Prostate gland (tissue), 2 donors: ENCODE measurements at regions of chr18 and their contacts with region 1.

Region 1: DNA sequence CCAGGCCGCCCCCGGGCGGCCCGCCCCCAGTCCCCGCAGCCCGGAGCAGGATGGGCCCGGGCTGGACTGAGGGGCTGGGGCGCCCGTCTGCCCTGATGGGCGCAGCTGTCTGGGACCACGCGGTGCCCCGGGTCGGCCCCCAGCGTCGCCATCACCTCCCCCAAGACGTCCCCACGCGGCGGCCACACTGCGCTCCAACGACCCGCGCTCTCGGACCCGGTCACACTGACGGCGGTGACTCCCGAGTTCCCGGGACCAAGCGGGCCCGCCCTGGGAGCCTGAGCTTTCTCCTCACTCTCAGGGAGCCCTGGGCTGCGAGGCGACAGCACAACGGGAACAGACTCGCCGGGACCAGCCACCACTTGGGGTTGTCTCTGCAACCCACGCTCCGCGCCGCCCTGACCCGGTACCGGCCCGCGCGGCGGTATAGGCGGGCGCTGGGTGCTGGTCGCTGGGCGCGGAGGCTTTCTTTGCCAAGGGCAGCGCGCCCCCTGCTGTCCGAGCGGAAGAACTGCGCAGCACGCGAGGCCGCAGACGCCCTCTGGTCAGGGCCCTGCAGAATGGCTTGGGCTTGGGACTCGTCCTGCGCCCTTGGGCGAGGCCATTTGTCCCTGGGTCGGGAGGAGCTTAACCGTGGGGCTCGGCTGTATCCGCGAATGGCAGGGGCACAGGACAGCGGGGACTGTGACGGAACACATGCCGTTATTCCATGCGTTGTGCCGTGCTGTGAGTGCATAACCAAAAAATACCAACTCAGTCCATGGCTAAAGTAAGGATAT is 54.8 kb upstream of the ANKRD62 start:
- DNase-seq: peak; percentile 68
- H3K4me3 ChIP-seq: peak overlapping the region; percentile 32 to 44
- H3K27ac ChIP-seq: peak overlapping the region in 1 of 2 donors; percentile 4
- H3K4me1 ChIP-seq: no peaks in the 10 kb centered on the region
- H3K27me3 ChIP-seq: no peaks in the 10 kb centered on the region
- CTCF ChIP-seq: peak; percentile 95 to 99 (median 96)
- POLR2A ChIP-seq: no peak

Region 2: GRCh38 chr18:11654736-11655605 is 383.9 kb before region 1 on chr18:
- intact Hi-C with region 1: loop called (anchors 10 kb)
- DNase-seq: peak; percentile 58
- H3K4me3 ChIP-seq: no peak overlapping the region
- H3K27ac ChIP-seq: no peak overlapping the region
- H3K4me1 ChIP-seq: no peaks in the 10 kb centered on the region
- H3K27me3 ChIP-seq: peaks cover 6% of the 10 kb centered on the region
- CTCF ChIP-seq: peak; percentile 63 to 86 (median 76)
- POLR2A ChIP-seq: no peak

Region 3: DNA sequence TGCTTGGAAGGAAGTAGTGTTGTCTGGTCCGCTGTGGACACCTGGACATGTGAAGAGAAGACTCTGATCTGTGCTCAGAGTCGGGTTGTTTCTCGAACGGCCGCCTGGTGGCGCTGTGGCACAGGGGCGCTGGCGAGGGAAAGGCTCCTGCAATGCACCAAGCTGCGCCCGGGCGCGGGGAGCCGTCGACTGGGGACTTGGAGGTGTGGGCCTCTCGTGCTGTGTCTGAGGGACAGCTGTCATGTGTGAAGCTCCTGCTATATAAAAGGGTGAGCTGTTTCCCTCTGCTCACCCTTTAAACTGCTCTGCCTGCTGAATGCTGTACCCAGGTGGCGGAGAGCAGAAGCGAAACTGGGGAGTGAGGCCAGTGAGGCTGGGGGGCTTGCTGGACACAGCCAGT is 305.8 kb before region 1 on chr18:
- intact Hi-C with region 1: loop called (anchors 5 kb)
- DNase-seq: peak; percentile 46
- H3K4me3 ChIP-seq: no peak overlapping the region
- H3K27ac ChIP-seq: no peak overlapping the region
- H3K4me1 ChIP-seq: no peaks in the 10 kb centered on the region
- H3K27me3 ChIP-seq: no peaks in the 10 kb centered on the region
- CTCF ChIP-seq: peak; percentile 67 to 85 (median 72)
- POLR2A ChIP-seq: no peak

Region 4: GRCh38 chr18:11851146-11851805 is 187.6 kb before region 1 on chr18 and contains the start of gene CHMP1B:
- intact Hi-C with region 1: loop called (anchors 10 kb)
- DNase-seq: peak; percentile 98
- H3K4me3 ChIP-seq: peak within 1 kb of the TSS; percentile 77 to 94
- H3K27ac ChIP-seq: peak within 1 kb of the TSS; percentile 87 to 91
- H3K4me1 ChIP-seq: no peaks in the 10 kb centered on the region
- H3K27me3 ChIP-seq: no peaks in the 10 kb centered on the region
- CTCF ChIP-seq: peak in 2 of 4 experiments; percentile 28 to 36
- POLR2A ChIP-seq: peak; percentile 98
- total RNA-seq, gene CHMP1B: 42.8 to 50.0 TPM

Region 5: DNA sequence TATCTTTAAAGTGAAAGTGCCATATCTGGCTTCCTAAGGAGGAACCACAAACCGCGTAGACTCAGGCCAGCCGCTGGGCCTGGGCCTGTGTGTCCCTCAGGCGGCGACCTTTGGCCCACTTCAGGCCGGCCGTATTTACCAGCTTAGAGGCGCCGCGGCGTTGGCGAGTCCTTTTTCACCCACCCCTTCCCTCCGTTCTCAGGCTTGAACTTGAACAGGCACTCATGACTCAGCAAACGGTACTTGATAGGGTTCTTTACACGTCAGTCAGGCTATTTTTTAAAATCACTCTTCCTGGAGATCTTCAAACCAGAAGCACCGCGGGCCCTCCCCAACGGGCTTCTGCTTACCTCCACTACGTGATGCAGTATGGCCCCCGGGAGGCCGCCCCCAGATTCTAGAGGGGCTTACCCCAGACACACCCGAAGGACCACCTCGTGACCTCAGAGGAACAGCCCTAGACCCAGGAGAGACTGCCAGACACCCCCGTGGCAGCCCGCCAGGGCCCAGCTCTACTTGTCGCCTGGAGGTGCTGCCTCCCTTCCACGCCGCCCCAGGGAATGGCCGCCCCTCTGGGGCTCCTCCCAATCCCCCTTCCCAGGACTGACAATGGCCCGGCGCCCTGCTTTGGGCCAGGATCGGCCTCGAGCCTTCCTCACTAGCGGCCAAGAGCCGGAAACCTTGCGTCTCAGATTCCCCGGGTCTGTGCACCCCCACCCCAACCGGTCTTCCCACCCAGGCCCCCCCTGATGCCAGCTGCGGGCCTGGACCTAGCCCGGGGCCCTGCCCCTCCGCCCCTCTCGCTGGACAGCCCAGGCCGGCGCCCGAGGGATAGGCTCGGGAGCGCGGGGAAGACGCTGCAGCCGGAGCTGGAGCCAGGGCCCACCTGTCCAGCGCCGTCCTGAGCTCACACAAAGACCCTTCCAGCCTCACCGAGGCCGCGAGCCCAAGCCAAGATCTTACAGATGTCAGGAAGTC is 91.3 kb before region 1 on chr18:
- intact Hi-C with region 1: loop called (anchors 5 kb)
- DNase-seq: peak; percentile 83
- H3K4me3 ChIP-seq: peak overlapping the region; percentile 25 to 28
- H3K27ac ChIP-seq: peak overlapping the region; percentile 72 to 80
- H3K4me1 ChIP-seq: no peaks in the 10 kb centered on the region
- H3K27me3 ChIP-seq: no peaks in the 10 kb centered on the region
- CTCF ChIP-seq: peak in 1 of 4 experiments; percentile 9
- POLR2A ChIP-seq: peak; percentile 70

Region 6: DNA sequence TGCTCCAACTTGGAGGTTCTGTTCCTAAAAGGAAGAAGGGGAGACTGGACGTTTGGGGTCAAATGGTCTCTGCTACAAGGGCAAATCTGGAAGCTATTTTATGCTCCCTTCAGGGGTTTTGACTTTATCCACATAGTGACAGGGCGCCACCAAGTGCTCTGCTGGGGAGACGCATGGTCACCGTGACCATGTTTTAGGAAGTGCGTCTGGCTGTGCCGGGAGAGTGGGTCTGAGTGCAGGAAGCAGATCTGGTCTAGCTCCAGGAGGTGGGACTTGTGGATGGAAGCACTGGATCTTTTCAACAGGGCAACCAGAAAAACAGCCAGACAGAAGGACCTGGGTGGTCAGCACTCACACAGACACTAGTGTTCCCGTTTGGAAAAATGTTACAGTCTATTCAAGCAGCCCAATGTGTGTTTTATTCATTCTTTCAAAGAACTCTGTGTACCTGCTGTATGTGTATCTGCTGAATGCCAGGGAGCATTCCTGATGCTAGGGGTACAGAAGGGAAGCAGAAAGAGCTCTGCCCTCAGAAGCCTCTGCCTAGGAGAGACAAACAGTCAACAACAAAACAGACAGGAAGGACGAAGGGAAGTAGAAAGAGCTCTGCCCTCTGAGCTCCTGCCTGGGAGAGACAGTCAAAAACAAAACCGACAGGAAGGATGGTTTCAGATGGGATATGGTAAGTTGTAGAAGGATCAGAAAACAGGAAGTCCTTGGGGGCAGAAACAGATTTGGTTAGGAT is 43.2 kb before region 1 on chr18:
- intact Hi-C with region 1: loop called (anchors 5 kb)
- DNase-seq: peak; percentile 65
- H3K4me3 ChIP-seq: no peak overlapping the region
- H3K27ac ChIP-seq: peak overlapping the region; percentile 8 to 53
- H3K4me1 ChIP-seq: no peaks in the 10 kb centered on the region
- H3K27me3 ChIP-seq: no peaks in the 10 kb centered on the region
- CTCF ChIP-seq: peak; percentile 31 to 80 (median 70)
- POLR2A ChIP-seq: no peak